Transverse colon (tissue), 4 donors: ENCODE measurements at regions of chr11 and their contacts with region 1.

Region 1: GRCh38 chr11:129364143-129364654 is 11.4 kb upstream of the BARX2 start:
- DNase-seq: peak; percentile 88
- H3K4me3 ChIP-seq: no peak overlapping the region
- H3K27ac ChIP-seq: no peak overlapping the region
- H3K4me1 ChIP-seq: peaks cover 0 to 9% (median 4%) of the 10 kb centered on the region in 4 donors
- H3K27me3 ChIP-seq: peaks cover 62% of the 10 kb centered on the region
- CTCF ChIP-seq: peak; percentile 83 to 99 (median 97)
- EP300 ChIP-seq: no peak
- POLR2A ChIP-seq: no peak

Region 2: DNA sequence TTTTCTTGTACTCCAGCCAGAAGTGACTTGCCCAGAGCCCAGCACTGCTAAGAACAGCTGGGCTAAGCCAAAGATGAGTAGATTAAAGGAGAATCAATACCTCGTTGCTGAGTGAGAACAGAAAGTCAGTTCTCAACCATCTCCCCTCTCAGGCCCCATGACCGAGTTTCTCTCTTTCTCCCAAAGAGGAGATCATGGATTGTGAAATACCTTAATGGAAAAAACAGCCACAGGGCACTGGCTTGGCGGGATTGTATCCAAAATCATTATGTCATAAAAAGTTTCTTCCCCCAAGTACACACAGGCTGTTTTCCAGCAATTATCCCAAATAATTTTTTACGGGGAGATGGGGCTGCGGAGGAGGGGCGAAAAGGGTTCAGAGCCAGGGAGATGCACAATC is 339.6 kb after region 1 on chr11:
- in situ Hi-C with region 1: loop called in 1 of 4 experiments (anchors 25 kb)
- intact Hi-C with region 1: no loop called
- DNase-seq: no peak
- H3K4me3 ChIP-seq: no peak overlapping the region
- H3K27ac ChIP-seq: no peak overlapping the region
- H3K4me1 ChIP-seq: no peaks in the 10 kb centered on the region
- H3K27me3 ChIP-seq: no peaks in the 10 kb centered on the region
- CTCF ChIP-seq: no peak
- EP300 ChIP-seq: no peak
- POLR2A ChIP-seq: no peak

Region 3: GRCh38 chr11:129728575-129728974 is 364.4 kb after region 1 on chr11:
- in situ Hi-C with region 1: loop called in 3 of 4 experiments (anchors 25 kb)
- intact Hi-C with region 1: no loop called
- DNase-seq: no peak
- H3K4me3 ChIP-seq: no peak overlapping the region
- H3K27ac ChIP-seq: no peak overlapping the region
- H3K4me1 ChIP-seq: no peaks in the 10 kb centered on the region
- H3K27me3 ChIP-seq: no peaks in the 10 kb centered on the region
- CTCF ChIP-seq: no peak
- EP300 ChIP-seq: no peak
- POLR2A ChIP-seq: no peak

Region 4: DNA sequence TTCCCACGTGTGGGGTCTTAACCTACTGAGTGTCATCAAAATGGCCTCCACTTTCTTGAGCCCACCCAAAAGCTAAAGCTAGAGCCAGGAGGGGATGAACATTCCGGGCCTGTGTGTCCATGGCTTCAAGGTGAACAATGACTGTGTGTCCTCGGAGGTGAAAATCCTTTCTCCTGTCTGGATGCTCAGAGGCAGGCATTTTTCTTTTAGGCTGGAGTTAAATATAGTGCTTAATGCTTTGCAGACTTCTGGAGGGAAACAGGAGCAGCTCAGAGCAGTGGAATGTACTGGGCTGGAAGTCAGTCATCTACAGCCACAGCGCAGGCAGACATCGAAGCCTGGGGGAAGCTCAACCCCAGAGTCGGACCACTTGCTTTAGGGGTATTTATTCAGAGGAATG is 382.9 kb after region 1 on chr11:
- in situ Hi-C with region 1: loop called in 3 of 4 experiments (anchors 5 to 25 kb)
- intact Hi-C with region 1: no loop called
- DNase-seq: no peak
- H3K4me3 ChIP-seq: no peak overlapping the region
- H3K27ac ChIP-seq: no peak overlapping the region
- H3K4me1 ChIP-seq: peaks cover 0 to 9% (median 5%) of the 10 kb centered on the region in 4 donors
- H3K27me3 ChIP-seq: peaks cover 19% of the 10 kb centered on the region
- CTCF ChIP-seq: no peak
- EP300 ChIP-seq: no peak
- POLR2A ChIP-seq: no peak